IMR-90 (cell line): ENCODE measurements at regions of chr2 and their contacts with region 1.

Region 1: GRCh38 chr2:69724540-69725159 is 17.3 kb upstream of the ANXA4 start:
- DNase-seq: peak; percentile 74
- ATAC-seq: peak; percentile 97
- H3K4me3 ChIP-seq: peak overlapping the region; percentile 20; the same call in 1 of the 2 replicates
- H3K27ac ChIP-seq: no peak overlapping the region
- H3K4me1 ChIP-seq: no peaks in the 10 kb centered on the region
- H3K27me3 ChIP-seq: no peaks in the 10 kb centered on the region
- CTCF ChIP-seq: peak; percentile 91
- POLR2A ChIP-seq: 0 out of 2 replicates have a peak, but pooled peaks have one; percentile 44
- RAD21 ChIP-seq: peak; percentile 93

Region 2: GRCh38 chr2:69741619-69742466 is 17.2 kb after region 1 on chr2 and contains the start of gene ANXA4:
- CTCF ChIA-PET with region 1: interaction called, 31 read pairs
- POLR2A ChIA-PET with region 1: no interaction called
- dilution Hi-C with region 1: no loop called
- in situ Hi-C with region 1: no loop called
- intact Hi-C with region 1: no loop called
- DNase-seq: peak; percentile 58
- ATAC-seq: peak; percentile 92
- H3K4me3 ChIP-seq: peak within 1 kb of the TSS; percentile 89
- H3K27ac ChIP-seq: peak within 1 kb of the TSS; percentile 79
- H3K4me1 ChIP-seq: peaks cover 2% of the 10 kb centered on the region
- H3K27me3 ChIP-seq: no peaks in the 10 kb centered on the region
- CTCF ChIP-seq: no peak
- POLR2A ChIP-seq: no peak
- RAD21 ChIP-seq: no peak
- total RNA-seq, gene ANXA4: 22.2 and 25.8 TPM in 2 replicates

Region 3: DNA sequence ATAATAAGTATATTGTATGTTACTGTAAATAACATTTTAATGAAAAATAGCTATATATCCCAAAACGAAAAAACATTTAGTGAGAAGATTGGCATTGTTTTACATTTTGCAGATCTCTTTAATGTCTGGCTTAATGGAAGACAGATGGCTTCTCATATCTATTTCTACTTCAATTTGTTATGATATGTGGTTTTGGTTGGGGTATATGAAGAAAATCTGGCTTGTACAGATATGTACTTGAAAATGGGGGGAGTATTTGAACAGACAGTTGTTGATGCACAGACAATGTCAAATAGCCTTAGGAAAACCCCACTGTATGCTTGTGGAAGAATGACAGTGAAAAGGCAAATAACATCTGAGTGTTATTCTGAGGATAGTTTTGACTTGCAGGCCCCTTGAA is 81.2 kb after region 1 on chr2:
- CTCF ChIA-PET with region 1: interaction called, 10 read pairs
- POLR2A ChIA-PET with region 1: interaction called, 4 read pairs
- dilution Hi-C with region 1: no loop called
- in situ Hi-C with region 1: no loop called
- intact Hi-C with region 1: no loop called
- DNase-seq: no peak
- ATAC-seq: no peak
- H3K4me3 ChIP-seq: no peak overlapping the region
- H3K27ac ChIP-seq: no peak overlapping the region
- H3K4me1 ChIP-seq: no peaks in the 10 kb centered on the region
- H3K27me3 ChIP-seq: no peaks in the 10 kb centered on the region
- CTCF ChIP-seq: no peak
- POLR2A ChIP-seq: no peak
- RAD21 ChIP-seq: no peak

Region 4: GRCh38 chr2:69893684-69894551 is 169.3 kb after region 1 on chr2 and contains the start of gene SNRNP27:
- CTCF ChIA-PET with region 1: interaction called, 7 read pairs
- POLR2A ChIA-PET with region 1: no interaction called
- dilution Hi-C with region 1: no loop called
- in situ Hi-C with region 1: no loop called
- intact Hi-C with region 1: loop called (anchors 2 kb)
- DNase-seq: peak; percentile 83
- ATAC-seq: peak; percentile 89
- H3K4me3 ChIP-seq: peak within 1 kb of the TSS; percentile 78
- H3K27ac ChIP-seq: peak within 1 kb of the TSS; percentile 82
- H3K4me1 ChIP-seq: peaks cover 4% of the 10 kb centered on the region; the same call in 1 of the 2 replicates
- H3K27me3 ChIP-seq: no peaks in the 10 kb centered on the region
- CTCF ChIP-seq: no peak
- POLR2A ChIP-seq: 0 out of 2 replicates have a peak, but pooled peaks have one; percentile 40
- RAD21 ChIP-seq: no peak
- total RNA-seq, gene SNRNP27: 8.8 and 36.1 TPM in 2 replicates

Region 5: DNA sequence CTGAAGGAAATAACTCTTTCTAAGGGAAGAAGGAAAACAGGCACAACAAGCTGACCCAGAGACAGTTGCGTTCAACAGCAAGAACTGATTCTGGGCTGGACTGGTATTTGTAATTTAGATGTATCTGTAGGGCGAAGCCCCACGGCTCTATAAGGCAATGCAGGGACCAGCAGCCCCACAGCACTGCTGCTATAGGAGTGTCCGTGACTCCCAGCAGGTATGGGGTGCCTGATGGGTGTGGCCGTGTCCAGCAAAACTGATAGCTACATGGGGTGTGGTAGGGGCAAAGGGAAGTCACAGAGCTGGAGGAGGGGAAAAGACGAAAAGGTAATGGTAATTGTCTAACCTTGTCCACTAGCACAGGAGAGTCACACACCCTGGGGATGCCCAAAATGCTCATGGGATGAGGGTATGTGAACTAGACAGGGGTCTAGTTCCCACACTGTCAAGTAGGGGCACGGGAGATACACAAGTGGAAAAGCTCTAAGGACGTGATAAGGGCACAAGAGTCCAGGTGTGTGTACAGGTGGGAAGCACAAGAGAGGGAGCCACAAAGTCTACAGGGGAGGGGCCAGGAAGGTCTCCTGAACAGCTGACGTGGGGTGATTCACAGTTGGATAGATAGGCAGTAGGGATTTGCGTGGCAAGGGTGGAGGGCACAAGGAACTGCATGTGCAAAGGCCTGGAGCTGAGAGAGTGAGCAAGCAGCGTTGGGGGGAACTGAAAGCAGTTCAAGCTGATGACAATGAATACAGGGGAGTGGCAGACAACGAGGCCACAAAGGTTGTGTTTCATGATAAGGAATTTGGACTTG is 285.3 kb after region 1 on chr2:
- CTCF ChIA-PET with region 1: no interaction called
- POLR2A ChIA-PET with region 1: no interaction called
- dilution Hi-C with region 1: no loop called
- in situ Hi-C with region 1: no loop called
- intact Hi-C with region 1: no loop called
- DNase-seq: no peak
- ATAC-seq: no peak
- H3K4me3 ChIP-seq: no peak overlapping the region
- H3K27ac ChIP-seq: no peak overlapping the region
- H3K4me1 ChIP-seq: peaks cover 3% of the 10 kb centered on the region
- H3K27me3 ChIP-seq: no peaks in the 10 kb centered on the region
- CTCF ChIP-seq: no peak
- POLR2A ChIP-seq: no peak
- RAD21 ChIP-seq: no peak

Region 6: GRCh38 chr2:70086838-70087701 is 362.4 kb after region 1 on chr2 and contains the start of gene PCBP1:
- CTCF ChIA-PET with region 1: no interaction called
- POLR2A ChIA-PET with region 1: no interaction called
- dilution Hi-C with region 1: no loop called
- in situ Hi-C with region 1: no loop called
- intact Hi-C with region 1: loop called (anchors 10 kb)
- DNase-seq: peak; percentile 95
- ATAC-seq: peak; percentile 73
- H3K4me3 ChIP-seq: peak within 1 kb of the TSS; percentile 95
- H3K27ac ChIP-seq: peak within 1 kb of the TSS; percentile 100
- H3K4me1 ChIP-seq: peaks cover 6% of the 10 kb centered on the region
- H3K27me3 ChIP-seq: no peaks in the 10 kb centered on the region
- CTCF ChIP-seq: no peak
- POLR2A ChIP-seq: peak; percentile 76
- RAD21 ChIP-seq: peak; percentile 2; the same call in 1 of the 2 replicates
- total RNA-seq, gene PCBP1: 33.6 and 33.7 TPM in 2 replicates